ENCODE measurements at regions of chr7 and their contacts with region 1.

Region 1: GRCh38 chr7:142771353-142771723 is 568 bp downstream of the PRSS2 start:
- DNase-seq: no peak
- H3K4me3 ChIP-seq: no peak overlapping the region
- H3K27ac ChIP-seq: no peak overlapping the region
- H3K4me1 ChIP-seq: peaks cover 8% of the 10 kb centered on the region
- H3K27me3 ChIP-seq: peaks cover 11 to 31% of the 10 kb centered on the region in 2 experiments
- CTCF ChIP-seq: no peak
- POLR2A ChIP-seq: no peak

Region 2: DNA sequence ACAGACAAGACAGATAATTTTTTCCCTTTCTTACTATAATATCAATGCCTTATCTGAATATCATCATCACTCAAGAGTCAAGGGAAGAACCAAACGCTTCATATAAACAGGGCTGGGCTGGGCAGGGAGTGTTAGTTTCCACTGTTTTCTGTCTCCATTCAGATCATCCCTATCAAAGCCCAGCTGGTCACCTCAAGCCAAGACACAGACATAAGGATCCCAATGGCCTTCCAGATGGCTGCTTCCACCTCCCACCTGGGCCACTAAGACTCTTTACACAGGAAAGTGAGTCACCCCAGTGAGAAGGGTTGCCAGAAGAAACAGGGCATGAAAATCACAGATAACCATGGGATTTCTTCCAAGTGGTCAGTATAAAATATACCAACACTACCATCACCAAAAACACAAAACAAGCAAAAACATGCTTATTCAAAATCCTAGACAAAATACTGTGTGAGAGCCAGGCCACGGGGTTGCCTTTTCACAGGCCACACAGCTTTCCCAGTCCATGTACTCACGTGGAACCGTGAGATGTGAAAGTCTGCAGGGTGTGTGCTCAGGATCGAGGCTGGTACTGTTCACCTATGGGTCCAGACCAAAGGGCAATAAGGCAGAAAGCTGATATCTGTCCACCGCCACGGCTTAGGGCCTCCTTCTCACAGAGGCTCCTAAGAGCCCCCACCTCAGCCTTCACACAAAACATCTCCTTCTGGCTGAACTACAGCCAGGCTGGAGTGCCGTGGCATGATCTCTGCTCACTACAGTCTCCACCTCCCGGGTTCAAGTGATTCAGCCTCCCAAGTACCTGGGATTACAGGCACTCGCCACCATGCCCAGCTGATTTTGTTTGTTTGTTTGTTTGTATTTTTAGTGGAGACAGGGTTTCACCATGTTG is 16.4 kb before region 1 on chr7:
- CTCF ChIA-PET with region 1: interaction called, 5 read pairs
- POLR2A ChIA-PET with region 1: no interaction called
- dilution Hi-C with region 1: no loop called
- intact Hi-C with region 1: loop called (anchors 2 kb)
- DNase-seq: peak; percentile 50
- H3K4me3 ChIP-seq: no peak overlapping the region
- H3K27ac ChIP-seq: no peak overlapping the region
- H3K4me1 ChIP-seq: peaks cover 3% of the 10 kb centered on the region
- H3K27me3 ChIP-seq: peaks cover 6 to 13% of the 10 kb centered on the region in 2 experiments
- CTCF ChIP-seq: no peak
- POLR2A ChIP-seq: no peak

Region 3: GRCh38 chr7:142833174-142834048 is 62.1 kb after region 1 on chr7:
- CTCF ChIA-PET with region 1: no interaction called
- POLR2A ChIA-PET with region 1: no interaction called
- dilution Hi-C with region 1: no loop called
- intact Hi-C with region 1: no loop called
- DNase-seq: no peak
- H3K4me3 ChIP-seq: no peak overlapping the region
- H3K27ac ChIP-seq: no peak overlapping the region
- H3K4me1 ChIP-seq: no peaks in the 10 kb centered on the region
- H3K27me3 ChIP-seq: peaks cover 0 to 2% of the 10 kb centered on the region in 2 experiments
- CTCF ChIP-seq: no peak
- POLR2A ChIP-seq: no peak